CD4-positive, alpha-beta memory T cell (primary cell): ENCODE measurements at regions of chr3 and their contacts with region 1.

Region 1: DNA sequence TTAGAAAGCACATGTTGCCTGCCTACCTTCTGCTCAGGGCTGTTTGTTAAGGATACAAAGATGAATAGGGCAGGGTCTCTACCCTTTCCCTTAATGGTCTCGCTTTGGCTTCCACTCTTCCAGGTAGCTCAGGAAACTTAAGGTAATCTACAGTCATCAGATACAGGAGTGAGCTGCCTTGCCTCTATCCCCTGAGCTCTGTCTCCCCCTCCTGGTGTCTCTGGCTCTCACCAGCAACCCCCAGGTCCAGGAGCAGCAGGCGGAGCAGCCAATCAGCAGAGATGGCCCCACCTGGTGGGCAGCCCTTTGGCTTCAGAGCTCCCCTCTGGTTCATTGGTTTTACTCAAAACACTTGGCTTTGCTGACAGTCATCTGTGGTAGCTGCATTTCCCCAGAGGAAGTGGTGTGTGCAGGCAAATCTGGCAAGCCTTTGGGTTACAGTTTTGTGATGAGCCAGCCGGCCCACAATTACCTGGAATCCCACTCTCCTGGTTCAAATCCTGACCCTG is 8.5 kb upstream of the CX3CR1 start:
- DNase-seq: peak; percentile 77 to 82 (median 79)
- H3K4me3 ChIP-seq: no peak overlapping the region
- H3K4me3 Mint-ChIP-seq: peak overlapping the region in 1 of 8 donors; percentile 46
- H3K27ac ChIP-seq: peak overlapping the region; percentile 14
- H3K27ac Mint-ChIP-seq: peak overlapping the region in 6 of 7 donors; percentile 24 to 88 (median 66)
- H3K4me1 ChIP-seq: peaks cover 9% of the 10 kb centered on the region
- H3K4me1 Mint-ChIP-seq: peaks cover 17 to 41% (median 30%) of the 10 kb centered on the region in 4 donors
- H3K27me3 ChIP-seq: no peaks in the 10 kb centered on the region
- H3K27me3 Mint-ChIP-seq: no peaks in the 10 kb centered on the region

Region 2: DNA sequence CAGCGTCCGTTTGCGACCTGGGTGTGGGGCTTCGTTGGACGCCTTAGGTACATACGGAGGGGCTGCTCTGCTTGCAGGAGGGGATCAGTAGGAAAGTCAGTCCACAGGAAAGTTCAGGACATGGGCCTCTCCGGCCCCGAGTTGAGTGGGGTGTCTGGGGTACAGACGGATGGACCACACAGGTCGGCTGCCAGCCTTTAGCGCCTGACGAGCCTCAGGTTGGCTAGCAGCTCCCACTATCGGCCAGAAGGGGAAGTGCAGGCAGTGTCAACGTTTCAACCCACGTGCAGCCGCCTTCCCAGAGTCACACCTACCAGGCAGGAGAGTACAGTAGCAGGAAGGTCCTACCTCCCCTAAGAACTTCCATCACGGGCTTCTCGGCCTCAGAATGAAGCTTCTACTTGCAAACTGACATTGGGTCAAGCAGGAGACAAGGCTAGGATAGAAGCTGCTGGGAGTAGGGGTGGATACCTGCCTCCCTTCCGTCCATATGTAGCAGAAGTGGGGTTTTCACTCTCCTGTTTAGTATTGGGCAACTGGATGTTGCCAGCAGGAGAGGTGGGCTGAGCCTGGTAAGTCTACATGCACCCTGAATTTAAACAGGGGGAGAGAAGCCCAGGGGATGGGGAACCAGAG is 637.1 kb before region 1 on chr3:
- CTCF ChIA-PET with region 1: no interaction called
- POLR2A ChIA-PET with region 1: no interaction called
- intact Hi-C with region 1: loop called (anchors 2 kb)
- DNase-seq: peak in 4 of 5 donors; percentile 64 to 72 (median 70)
- H3K4me3 ChIP-seq: no peak overlapping the region
- H3K4me3 Mint-ChIP-seq: peak overlapping the region in 4 of 8 donors; percentile 7 to 73 (median 53)
- H3K27ac ChIP-seq: no peak overlapping the region
- H3K27ac Mint-ChIP-seq: peak overlapping the region in 2 of 7 donors; percentile 49 to 76
- H3K4me1 ChIP-seq: peaks cover 22% of the 10 kb centered on the region
- H3K4me1 Mint-ChIP-seq: peaks cover 6 to 10% (median 8%) of the 10 kb centered on the region in 4 donors
- H3K27me3 ChIP-seq: peaks cover 10% of the 10 kb centered on the region
- H3K27me3 Mint-ChIP-seq: peaks cover 8 to 26% of the 10 kb centered on the region in 2 donors

Region 3: GRCh38 chr3:39013289-39013688 is 275.1 kb before region 1 on chr3:
- CTCF ChIA-PET with region 1: no interaction called
- POLR2A ChIA-PET with region 1: no interaction called
- intact Hi-C with region 1: no loop called
- DNase-seq: no peak
- H3K4me3 ChIP-seq: no peak overlapping the region
- H3K4me3 Mint-ChIP-seq: no peak overlapping the region
- H3K27ac ChIP-seq: no peak overlapping the region
- H3K27ac Mint-ChIP-seq: no peak overlapping the region
- H3K4me1 ChIP-seq: no peaks in the 10 kb centered on the region
- H3K4me1 Mint-ChIP-seq: no peaks in the 10 kb centered on the region
- H3K27me3 ChIP-seq: no peaks in the 10 kb centered on the region
- H3K27me3 Mint-ChIP-seq: peaks cover 13 to 24% of the 10 kb centered on the region in 2 donors

Region 4: DNA sequence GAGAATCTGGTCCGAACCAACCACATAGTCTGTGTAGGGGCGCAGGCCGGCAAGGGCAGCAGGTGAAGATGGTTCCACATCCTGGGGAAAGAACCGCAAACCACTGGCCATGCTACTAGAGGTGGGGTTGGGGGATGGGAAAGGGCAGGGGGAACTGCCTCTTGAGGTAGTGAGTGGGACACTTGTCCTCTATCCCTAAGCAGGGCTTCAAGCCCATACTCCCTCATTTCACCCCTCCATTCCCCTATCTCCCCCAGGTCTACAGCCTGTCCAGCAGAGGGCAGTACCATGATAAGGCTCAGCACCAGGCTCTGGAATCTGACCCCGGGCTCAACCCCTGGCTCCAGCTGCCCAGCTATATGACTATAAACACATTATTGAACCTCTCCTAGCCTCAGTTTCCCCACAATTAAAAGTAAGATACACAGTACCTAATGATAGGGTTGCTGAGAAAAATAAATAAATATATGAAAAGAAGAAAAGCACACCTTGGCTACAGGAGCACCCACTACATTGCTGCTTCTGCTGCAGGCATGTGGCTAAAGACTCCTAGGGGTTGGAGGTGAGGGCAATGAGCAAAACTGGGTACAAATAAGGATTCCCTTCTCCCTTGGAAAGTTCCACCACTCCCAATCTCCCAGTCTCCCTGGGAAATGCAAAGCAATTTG is 187.2 kb before region 1 on chr3:
- CTCF ChIA-PET with region 1: interaction called, 170 read pairs
- POLR2A ChIA-PET with region 1: no interaction called
- intact Hi-C with region 1: loop called (anchors 1 kb)
- DNase-seq: peak in 4 of 5 donors; percentile 47 to 50 (median 48)
- H3K4me3 ChIP-seq: no peak overlapping the region
- H3K4me3 Mint-ChIP-seq: no peak overlapping the region
- H3K27ac ChIP-seq: no peak overlapping the region
- H3K27ac Mint-ChIP-seq: peak overlapping the region in 6 of 7 donors; percentile 47 to 79 (median 58)
- H3K4me1 ChIP-seq: peaks cover 24% of the 10 kb centered on the region
- H3K4me1 Mint-ChIP-seq: peaks cover 23 to 56% (median 39%) of the 10 kb centered on the region in 4 donors
- H3K27me3 ChIP-seq: no peaks in the 10 kb centered on the region
- H3K27me3 Mint-ChIP-seq: no peaks in the 10 kb centered on the region

Region 5: GRCh38 chr3:39166134-39166731 is 122.1 kb before region 1 on chr3:
- CTCF ChIA-PET with region 1: interaction called, 14 read pairs
- POLR2A ChIA-PET with region 1: no interaction called
- intact Hi-C with region 1: no loop called
- DNase-seq: no peak
- H3K4me3 ChIP-seq: no peak overlapping the region
- H3K4me3 Mint-ChIP-seq: no peak overlapping the region
- H3K27ac ChIP-seq: no peak overlapping the region
- H3K27ac Mint-ChIP-seq: peak overlapping the region in 1 of 7 donors; percentile 36
- H3K4me1 ChIP-seq: no peaks in the 10 kb centered on the region
- H3K4me1 Mint-ChIP-seq: no peaks in the 10 kb centered on the region
- H3K27me3 ChIP-seq: no peaks in the 10 kb centered on the region
- H3K27me3 Mint-ChIP-seq: no peaks in the 10 kb centered on the region

Region 6: GRCh38 chr3:39234705-39235104 is 53.6 kb before region 1 on chr3:
- CTCF ChIA-PET with region 1: interaction called, 18 read pairs
- POLR2A ChIA-PET with region 1: no interaction called
- intact Hi-C with region 1: no loop called
- DNase-seq: peak in 4 of 5 donors; percentile 31 to 38 (median 35)
- H3K4me3 ChIP-seq: no peak overlapping the region
- H3K4me3 Mint-ChIP-seq: peak overlapping the region; percentile 21 to 69 (median 62)
- H3K27ac ChIP-seq: peak overlapping the region; percentile 1
- H3K27ac Mint-ChIP-seq: peak overlapping the region; percentile 5 to 86 (median 84)
- H3K4me1 ChIP-seq: peaks cover 21% of the 10 kb centered on the region
- H3K4me1 Mint-ChIP-seq: peaks cover 16 to 27% (median 19%) of the 10 kb centered on the region in 4 donors
- H3K27me3 ChIP-seq: no peaks in the 10 kb centered on the region
- H3K27me3 Mint-ChIP-seq: peaks cover 2 to 8% of the 10 kb centered on the region in 2 donors

Region 7: GRCh38 chr3:39346785-39347585 is 58.6 kb after region 1 on chr3:
- CTCF ChIA-PET with region 1: interaction called, 21 read pairs
- POLR2A ChIA-PET with region 1: no interaction called
- intact Hi-C with region 1: no loop called
- DNase-seq: no peak
- H3K4me3 ChIP-seq: no peak overlapping the region
- H3K4me3 Mint-ChIP-seq: peak overlapping the region in 4 of 8 donors; percentile 2 to 55 (median 32)
- H3K27ac ChIP-seq: no peak overlapping the region
- H3K27ac Mint-ChIP-seq: peak overlapping the region; percentile 0 to 78 (median 31)
- H3K4me1 ChIP-seq: peaks cover 24% of the 10 kb centered on the region
- H3K4me1 Mint-ChIP-seq: peaks cover 9 to 57% (median 32%) of the 10 kb centered on the region in 4 donors
- H3K27me3 ChIP-seq: no peaks in the 10 kb centered on the region
- H3K27me3 Mint-ChIP-seq: no peaks in the 10 kb centered on the region